ENCODE measurements at regions of chr19 and their contacts with region 1.

Region 1: DNA sequence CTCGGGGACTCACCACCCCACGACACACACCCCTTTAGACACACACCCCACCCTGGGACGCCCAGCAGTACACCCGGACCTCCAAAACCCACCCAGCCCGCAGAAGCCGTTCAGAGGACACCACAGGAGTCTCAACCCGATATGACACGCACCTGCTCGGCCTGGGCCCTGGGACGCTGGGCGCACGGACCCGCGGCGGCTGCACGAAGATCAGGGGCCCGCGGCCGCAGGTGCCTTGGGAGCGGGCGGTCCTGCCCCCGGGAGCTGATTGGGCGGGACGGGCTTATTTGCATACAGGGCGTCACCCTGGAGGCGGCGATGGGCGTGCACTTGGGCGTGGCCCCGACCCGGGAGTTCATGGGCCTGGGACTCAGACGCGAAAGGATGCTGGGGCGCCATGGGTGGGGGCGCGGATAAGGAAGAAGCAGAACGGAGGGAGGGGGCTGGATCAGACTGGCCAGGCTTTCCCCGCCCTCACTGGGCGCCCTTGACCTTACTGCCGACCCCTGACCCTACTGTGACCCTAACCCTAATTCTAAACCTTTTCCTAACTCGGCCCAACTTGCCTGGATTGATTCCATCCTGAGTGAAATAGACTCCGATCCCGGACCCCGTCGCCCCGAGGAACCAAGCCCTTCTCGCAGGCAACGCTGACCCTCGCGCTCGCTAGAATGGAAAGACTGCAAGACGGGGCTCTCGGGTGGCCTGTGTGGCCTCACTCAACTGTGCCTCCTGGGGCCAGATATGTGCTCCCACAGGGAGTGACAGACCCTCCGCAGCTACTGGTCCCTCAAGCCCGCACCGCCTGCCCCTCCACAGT is at the start of gene MEF2B:
- DNase-seq: peak; percentile 96
- H3K4me3 ChIP-seq: peak within 1 kb of the TSS in 1 of 2 experiments; percentile 21; a peak in 1 of 4 replicates
- H3K27ac ChIP-seq: no peak within 1 kb of the TSS
- H3K4me1 ChIP-seq: peaks cover 0 to 2% of the 10 kb centered on the region in 2 experiments; a peak in 2 of 4 replicates
- H3K27me3 ChIP-seq: no peaks in the 10 kb centered on the region
- CTCF ChIP-seq: no peak
- EP300 ChIP-seq: no peak
- RAD21 ChIP-seq: no peak
- polyA plus RNA-seq, gene MEF2B: 1.0 and 1.1 TPM in 2 replicates

Region 2: DNA sequence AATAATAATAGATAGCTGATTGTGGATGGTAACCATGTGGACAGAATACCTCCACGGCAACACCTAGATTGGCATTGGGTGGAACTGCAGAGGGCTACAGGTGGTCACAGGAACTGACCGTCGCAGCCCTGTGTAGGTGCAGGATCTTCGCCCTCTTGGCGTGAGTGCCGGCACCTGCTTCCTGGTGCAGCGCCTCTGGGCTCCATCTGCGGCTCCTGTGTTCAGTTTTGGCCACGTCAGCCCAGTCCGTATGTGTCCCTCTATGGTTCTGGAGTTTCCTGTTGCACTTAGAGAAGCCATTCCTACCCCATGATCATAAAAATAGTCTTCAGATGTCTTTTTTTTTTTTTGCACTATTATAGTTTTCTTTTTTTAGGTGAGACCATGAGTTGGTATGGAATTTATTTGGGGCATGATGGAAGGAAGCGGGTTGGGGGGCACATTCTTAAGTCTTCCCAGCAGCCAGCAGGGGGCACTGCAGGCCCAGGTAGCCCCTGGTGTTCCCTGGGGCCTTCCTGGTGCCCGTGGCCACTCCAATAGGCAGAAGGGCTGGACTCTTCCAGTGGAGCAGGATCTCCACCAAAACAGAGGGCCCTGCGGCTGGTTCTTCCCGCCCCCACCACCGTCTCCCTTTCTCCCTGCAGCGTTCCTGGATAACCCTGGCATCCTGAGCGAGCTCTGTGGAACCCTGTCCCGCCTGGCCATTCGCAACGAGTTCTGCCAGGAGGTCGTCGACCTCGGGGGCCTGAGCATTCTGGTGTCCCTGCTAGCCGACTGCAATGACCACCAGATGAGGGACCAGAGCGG is 116.6 kb before region 1 on chr19:
- CTCF ChIA-PET with region 1: interaction called, 24 read pairs
- POLR2A ChIA-PET with region 1: no interaction called
- DNase-seq: peak; percentile 82
- H3K4me3 ChIP-seq: no peak overlapping the region; a peak in 1 of 4 replicates
- H3K27ac ChIP-seq: no peak overlapping the region
- H3K4me1 ChIP-seq: no peaks in the 10 kb centered on the region
- H3K27me3 ChIP-seq: no peaks in the 10 kb centered on the region
- CTCF ChIP-seq: peak; percentile 84
- EP300 ChIP-seq: no peak
- RAD21 ChIP-seq: peak; percentile 72

Region 3: GRCh38 chr19:19138169-19138981 is 31.9 kb before region 1 on chr19 and contains the start of gene TMEM161A:
- CTCF ChIA-PET with region 1: interaction called, 13 read pairs
- POLR2A ChIA-PET with region 1: no interaction called
- DNase-seq: peak; percentile 100
- H3K4me3 ChIP-seq: peak within 1 kb of the TSS; percentile 68 to 89
- H3K27ac ChIP-seq: peak within 1 kb of the TSS; percentile 48 to 51; a peak in 2 of 4 replicates
- H3K4me1 ChIP-seq: peaks cover 0 to 8% of the 10 kb centered on the region in 2 experiments; a peak in 2 of 4 replicates
- H3K27me3 ChIP-seq: no peaks in the 10 kb centered on the region
- CTCF ChIP-seq: no peak
- EP300 ChIP-seq: no peak
- RAD21 ChIP-seq: no peak
- polyA plus RNA-seq, gene TMEM161A: 37.8 and 39.3 TPM in 2 replicates

Region 4: GRCh38 chr19:19145684-19146608 is 24.3 kb before region 1 on chr19:
- CTCF ChIA-PET with region 1: interaction called, 99 read pairs
- POLR2A ChIA-PET with region 1: no interaction called
- DNase-seq: peak; percentile 93
- H3K4me3 ChIP-seq: no peak overlapping the region
- H3K27ac ChIP-seq: no peak overlapping the region
- H3K4me1 ChIP-seq: no peaks in the 10 kb centered on the region; a peak in 1 of 4 replicates
- H3K27me3 ChIP-seq: no peaks in the 10 kb centered on the region
- CTCF ChIP-seq: peak; percentile 83
- EP300 ChIP-seq: no peak
- RAD21 ChIP-seq: peak; percentile 79

Region 5: GRCh38 chr19:19185853-19186740 is 15.8 kb after region 1 on chr19:
- CTCF ChIA-PET with region 1: interaction called, 27 read pairs
- POLR2A ChIA-PET with region 1: no interaction called
- DNase-seq: peak; percentile 83
- H3K4me3 ChIP-seq: no peak overlapping the region; a peak in 1 of 4 replicates
- H3K27ac ChIP-seq: no peak overlapping the region
- H3K4me1 ChIP-seq: peaks cover 6 to 8% of the 10 kb centered on the region in 2 experiments; a peak in 2 of 4 replicates
- H3K27me3 ChIP-seq: no peaks in the 10 kb centered on the region
- CTCF ChIP-seq: peak; percentile 72
- EP300 ChIP-seq: no peak
- RAD21 ChIP-seq: peak; percentile 67

Region 6: GRCh38 chr19:19304186-19304965 is 134.1 kb after region 1 on chr19:
- CTCF ChIA-PET with region 1: no interaction called
- POLR2A ChIA-PET with region 1: no interaction called
- DNase-seq: peak; percentile 77
- H3K4me3 ChIP-seq: no peak overlapping the region
- H3K27ac ChIP-seq: peak overlapping the region in 1 of 2 experiments; percentile 17; a peak in 1 of 4 replicates
- H3K4me1 ChIP-seq: peaks cover 0 to 17% of the 10 kb centered on the region in 2 experiments; a peak in 1 of 4 replicates
- H3K27me3 ChIP-seq: no peaks in the 10 kb centered on the region
- CTCF ChIP-seq: no peak
- EP300 ChIP-seq: no peak
- RAD21 ChIP-seq: no peak

Region 7: DNA sequence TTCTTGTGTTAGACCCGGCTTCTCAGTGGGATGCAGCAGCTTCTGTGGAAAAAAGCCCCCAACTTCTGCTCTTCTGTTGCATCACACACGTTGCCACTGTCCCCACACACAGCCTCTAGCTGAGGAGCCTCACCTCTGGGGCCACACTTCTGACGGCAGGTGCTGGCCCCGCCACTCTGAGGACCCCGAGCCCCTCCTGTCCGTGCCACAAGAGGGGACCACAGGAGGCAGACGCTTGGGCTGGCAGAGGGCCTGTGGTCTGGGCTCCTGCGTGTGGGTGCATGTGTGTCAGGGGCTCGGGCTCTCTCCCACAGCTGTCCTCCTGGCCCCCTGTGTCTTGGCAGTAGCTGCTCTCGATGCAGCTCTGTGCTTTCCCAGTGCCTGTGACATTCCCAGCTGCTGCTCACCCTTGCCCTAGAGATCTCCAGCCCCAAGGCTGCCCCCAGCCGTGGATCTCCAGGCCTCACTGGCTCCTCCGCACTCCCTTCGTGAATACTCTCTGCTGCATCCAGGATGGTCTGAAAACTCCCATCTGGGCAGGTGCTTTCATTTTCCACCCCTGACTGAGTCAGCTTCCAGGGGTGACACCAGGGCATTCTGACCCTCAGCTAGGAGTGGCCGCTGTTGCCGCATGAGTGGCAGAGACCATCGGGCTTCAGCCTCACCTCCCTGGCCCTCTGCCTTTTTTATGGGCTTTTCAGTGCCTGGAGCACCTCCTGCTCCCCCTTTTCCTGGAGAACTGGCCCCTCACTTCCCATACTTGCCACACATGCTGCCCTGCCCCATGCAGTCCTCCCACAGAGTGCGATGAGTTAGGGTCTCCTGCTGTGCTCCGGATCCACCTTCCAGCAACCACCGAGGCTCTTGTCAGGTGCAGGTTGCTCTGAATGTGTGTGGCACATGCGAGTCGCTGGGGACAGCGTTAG is 164.1 kb after region 1 on chr19:
- CTCF ChIA-PET with region 1: interaction called, 11 read pairs
- POLR2A ChIA-PET with region 1: no interaction called
- DNase-seq: no peak
- H3K4me3 ChIP-seq: no peak overlapping the region
- H3K27ac ChIP-seq: no peak overlapping the region
- H3K4me1 ChIP-seq: no peaks in the 10 kb centered on the region
- H3K27me3 ChIP-seq: no peaks in the 10 kb centered on the region
- CTCF ChIP-seq: no peak
- EP300 ChIP-seq: no peak
- RAD21 ChIP-seq: no peak

Measured in SK-N-SH (cell line).